AG04450 (cell line): ENCODE measurements at regions of chr6 and their contacts with region 1.

Region 1: DNA sequence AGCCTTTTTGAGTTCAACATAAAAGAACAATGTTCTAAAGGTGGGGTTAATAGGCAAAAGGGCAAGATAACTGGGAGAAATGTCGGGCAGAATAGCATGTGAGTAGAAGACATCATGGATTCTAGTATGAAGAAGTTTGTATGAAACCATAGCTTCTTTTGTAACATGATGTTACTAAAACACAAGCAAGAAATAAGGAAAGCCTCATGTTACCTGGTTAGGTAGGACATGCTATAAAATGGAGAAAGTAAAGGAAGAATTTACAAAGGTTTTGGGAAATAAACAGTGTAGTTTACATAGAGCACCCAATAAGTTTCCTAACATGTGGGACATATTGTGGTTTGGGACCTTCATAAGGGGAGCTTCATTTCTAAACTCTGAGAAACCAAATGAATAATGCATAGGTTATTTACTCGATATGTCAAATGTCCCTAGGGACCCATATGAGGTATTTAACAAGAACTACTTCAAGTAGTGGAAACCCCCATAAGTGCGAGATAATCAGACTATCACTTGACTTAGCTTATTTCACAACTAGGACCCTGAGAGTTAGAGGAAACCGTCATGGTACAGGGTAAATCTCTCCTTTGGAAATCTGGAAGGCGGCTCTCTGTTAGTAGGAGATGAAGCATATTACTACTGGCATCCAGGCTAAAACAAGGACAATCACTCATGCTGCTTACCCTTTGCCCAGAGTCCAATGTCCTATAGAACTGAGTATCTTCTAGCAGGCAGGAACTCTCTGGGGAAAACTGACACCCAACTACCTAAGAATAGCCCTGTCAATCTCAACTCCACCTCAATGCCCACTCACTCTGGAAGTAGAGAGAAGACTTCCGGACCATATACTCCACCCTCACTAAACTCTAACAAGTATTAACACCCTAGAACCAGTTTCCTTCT is 57.5 kb downstream of the ILRUN start:
- DNase-seq: no peak
- H3K4me3 ChIP-seq: no peak overlapping the region
- H3K27ac ChIP-seq: no peak overlapping the region
- H3K27me3 ChIP-seq: no peaks in the 10 kb centered on the region
- CTCF ChIP-seq: no peak

Region 2: GRCh38 chr6:34161857-34162515 is 477.1 kb before region 1 on chr6:
- CTCF ChIA-PET with region 1: interaction called, 10 read pairs
- POLR2A ChIA-PET with region 1: no interaction called
- DNase-seq: no peak
- H3K4me3 ChIP-seq: no peak overlapping the region
- H3K27ac ChIP-seq: no peak overlapping the region
- H3K27me3 ChIP-seq: peaks cover 14% of the 10 kb centered on the region
- CTCF ChIP-seq: no peak

Region 3: DNA sequence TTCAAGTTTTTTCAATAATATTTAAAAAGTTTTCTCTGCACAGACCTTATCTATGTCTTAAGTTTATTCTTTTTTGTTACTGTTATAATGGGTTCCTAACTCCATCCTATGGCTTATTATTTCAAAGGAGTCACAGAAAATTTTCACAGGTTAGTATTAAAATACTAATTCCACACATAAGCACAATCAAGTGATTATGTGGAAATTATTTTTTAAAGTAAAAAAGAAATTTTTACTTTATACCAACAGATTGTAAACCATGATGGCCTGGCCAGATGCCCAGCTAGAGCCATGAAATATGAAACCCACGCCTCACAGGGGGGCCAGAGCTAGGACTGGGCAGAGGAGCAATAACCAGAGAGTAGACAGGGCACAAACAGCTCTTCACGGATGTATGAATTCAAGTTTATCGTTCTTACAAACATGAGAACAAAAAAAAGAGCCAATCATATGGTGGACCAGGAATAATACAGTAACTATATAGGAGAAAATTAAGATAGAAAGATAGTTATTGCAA is 280.6 kb before region 1 on chr6:
- CTCF ChIA-PET with region 1: no interaction called
- POLR2A ChIA-PET with region 1: no interaction called
- DNase-seq: no peak
- H3K4me3 ChIP-seq: no peak overlapping the region
- H3K27ac ChIP-seq: no peak overlapping the region
- H3K27me3 ChIP-seq: no peaks in the 10 kb centered on the region
- CTCF ChIP-seq: no peak

Region 4: DNA sequence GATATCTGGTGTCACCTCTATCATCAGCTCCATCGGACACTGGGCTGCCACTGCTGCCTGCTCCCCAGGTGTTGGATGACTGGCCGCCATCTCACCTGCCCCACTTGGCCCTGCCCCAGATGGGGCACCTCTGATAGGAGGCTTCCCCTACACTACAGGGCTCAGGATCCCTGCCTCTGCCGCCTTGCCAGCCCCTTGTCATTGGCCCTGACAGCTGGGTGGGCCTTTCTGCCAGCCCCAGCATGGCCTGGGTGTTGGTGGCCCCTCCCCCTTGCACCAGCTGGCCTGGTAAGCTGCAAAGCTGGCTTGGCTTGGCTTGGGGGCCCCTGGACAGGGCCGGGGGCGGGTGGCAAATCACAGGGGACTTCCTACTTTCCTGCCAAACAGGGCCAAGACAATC is 162.6 kb before region 1 on chr6:
- CTCF ChIA-PET with region 1: no interaction called
- POLR2A ChIA-PET with region 1: no interaction called
- DNase-seq: no peak
- H3K4me3 ChIP-seq: no peak overlapping the region
- H3K27ac ChIP-seq: no peak overlapping the region
- H3K27me3 ChIP-seq: peaks cover 3% of the 10 kb centered on the region
- CTCF ChIP-seq: no peak